ENCODE measurements at regions of chr1 and their contacts with region 1.

Region 1: DNA sequence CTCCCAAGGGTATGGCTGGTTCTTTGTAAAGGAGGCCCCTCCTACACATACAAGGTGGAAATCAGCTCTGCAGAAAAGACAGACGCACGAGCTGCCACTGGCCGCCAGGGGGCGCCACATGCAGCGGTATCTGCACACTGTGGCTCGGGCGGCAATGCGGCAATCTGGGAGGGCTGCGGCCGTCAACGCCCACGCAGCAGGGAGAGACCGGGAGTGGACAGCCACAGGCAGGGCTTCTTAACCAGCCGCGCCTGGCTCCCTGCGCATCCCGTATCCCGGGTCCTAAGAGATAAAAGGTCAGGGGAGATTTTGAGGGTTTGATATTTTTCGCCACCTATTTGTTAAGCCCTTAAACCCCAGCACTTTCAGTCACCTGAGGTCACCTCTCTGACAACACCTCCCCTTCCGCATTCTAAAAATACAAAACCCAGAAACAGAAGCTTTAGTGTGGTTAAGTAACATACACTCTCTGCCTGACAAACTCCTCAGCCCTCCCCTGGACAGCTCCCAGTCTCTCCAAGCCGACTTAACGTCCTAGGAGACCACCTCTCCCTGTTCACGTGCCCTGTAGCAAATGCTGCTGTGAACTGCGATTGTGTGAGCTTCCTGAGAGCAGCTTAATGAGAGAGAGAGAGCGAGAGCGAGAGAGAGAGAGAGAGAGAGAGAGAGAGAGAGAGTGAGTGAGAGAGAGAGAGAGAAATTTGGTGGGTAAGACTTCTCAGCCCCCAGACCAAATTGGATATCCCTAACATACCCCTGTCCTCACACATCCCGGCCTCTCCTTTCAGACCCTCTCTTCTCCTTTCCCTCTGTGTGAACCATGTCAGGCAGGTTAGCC is 13.5 kb upstream of the KCNA2 start:
- DNase-seq: peak; percentile 79 to 96 (median 90)
- ATAC-seq: peak; percentile 84
- H3K4me3 ChIP-seq: peak overlapping the region; percentile 62 to 65
- H3K4me3 Mint-ChIP-seq: peak overlapping the region; percentile 89
- H3K27ac ChIP-seq: peak overlapping the region; percentile 58 to 73
- H3K27ac Mint-ChIP-seq: peak overlapping the region; percentile 89
- H3K4me1 ChIP-seq: peaks cover 28% of the 10 kb centered on the region
- H3K4me1 Mint-ChIP-seq: peaks cover 41% of the 10 kb centered on the region
- H3K27me3 ChIP-seq: peaks cover 0 to 4% of the 10 kb centered on the region in 2 experiments
- H3K27me3 Mint-ChIP-seq: no peaks in the 10 kb centered on the region
- CTCF ChIP-seq: peak; percentile 97

Region 2: GRCh38 chr1:110196917-110197765 is 422.5 kb before region 1 on chr1:
- CTCF ChIA-PET with region 1: no interaction called
- POLR2A ChIA-PET with region 1: no interaction called
- intact Hi-C with region 1: no loop called
- DNase-seq: peak in 8 of 9 experiments; percentile 15 to 71 (median 55)
- ATAC-seq: peak; percentile 99
- H3K4me3 ChIP-seq: no peak overlapping the region
- H3K4me3 Mint-ChIP-seq: no peak overlapping the region
- H3K27ac ChIP-seq: no peak overlapping the region
- H3K27ac Mint-ChIP-seq: no peak overlapping the region
- H3K4me1 ChIP-seq: no peaks in the 10 kb centered on the region
- H3K4me1 Mint-ChIP-seq: no peaks in the 10 kb centered on the region
- H3K27me3 ChIP-seq: no peaks in the 10 kb centered on the region
- H3K27me3 Mint-ChIP-seq: no peaks in the 10 kb centered on the region
- CTCF ChIP-seq: peak; percentile 94

Region 3: DNA sequence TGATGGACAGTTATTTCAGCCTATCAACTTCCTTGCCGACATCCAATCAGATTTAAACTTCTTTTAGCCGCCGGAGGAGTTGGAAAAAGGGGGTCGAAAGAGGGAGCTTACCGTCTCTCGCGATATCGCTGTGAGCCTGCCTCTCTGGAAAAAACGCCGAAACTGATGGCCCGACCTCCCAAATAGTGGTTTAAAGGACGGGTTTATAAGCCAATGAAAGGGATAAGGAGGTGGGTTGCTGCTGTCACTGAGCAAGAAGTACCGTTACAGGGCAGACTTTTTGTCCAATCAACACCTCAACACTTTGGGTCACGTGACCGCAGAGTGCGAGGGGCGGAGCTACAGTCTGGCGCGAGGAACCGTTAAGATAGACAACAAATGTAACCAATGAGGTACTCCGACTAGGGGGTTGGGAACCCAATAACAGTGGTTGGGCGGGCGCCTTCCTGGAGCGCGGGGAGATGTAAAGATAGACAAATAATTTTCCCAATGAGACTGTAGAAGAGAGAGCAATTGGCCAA is 280.7 kb before region 1 on chr1 and contains the start of gene RBM15:
- CTCF ChIA-PET with region 1: no interaction called
- POLR2A ChIA-PET with region 1: no interaction called
- intact Hi-C with region 1: loop called in 1 of 2 experiments (anchors 1 kb)
- DNase-seq: peak; percentile 92 to 100 (median 96)
- ATAC-seq: peak; percentile 74
- H3K4me3 ChIP-seq: peak within 1 kb of the TSS; percentile 91 to 97
- H3K4me3 Mint-ChIP-seq: no peak within 1 kb of the TSS
- H3K27ac ChIP-seq: peak within 1 kb of the TSS; percentile 87 to 98
- H3K27ac Mint-ChIP-seq: no peak within 1 kb of the TSS
- H3K4me1 ChIP-seq: peaks cover 49% of the 10 kb centered on the region
- H3K4me1 Mint-ChIP-seq: peaks cover 56% of the 10 kb centered on the region
- H3K27me3 ChIP-seq: no peaks in the 10 kb centered on the region
- H3K27me3 Mint-ChIP-seq: no peaks in the 10 kb centered on the region
- CTCF ChIP-seq: no peak
- total RNA-seq, gene RBM15: 57.1 to 59.3 TPM

Region 4: GRCh38 chr1:110554871-110555801 is 64.5 kb before region 1 on chr1:
- CTCF ChIA-PET with region 1: interaction called, 34 read pairs
- POLR2A ChIA-PET with region 1: interaction called, 4 read pairs
- intact Hi-C with region 1: loop called (anchors 1 kb)
- DNase-seq: peak; percentile 24 to 75 (median 57)
- ATAC-seq: peak; percentile 97
- H3K4me3 ChIP-seq: peak overlapping the region in 1 of 2 experiments; percentile 23
- H3K4me3 Mint-ChIP-seq: peak overlapping the region; percentile 27
- H3K27ac ChIP-seq: no peak overlapping the region
- H3K27ac Mint-ChIP-seq: no peak overlapping the region
- H3K4me1 ChIP-seq: peaks cover 5% of the 10 kb centered on the region
- H3K4me1 Mint-ChIP-seq: peaks cover 4% of the 10 kb centered on the region
- H3K27me3 ChIP-seq: no peaks in the 10 kb centered on the region
- H3K27me3 Mint-ChIP-seq: peaks cover 44% of the 10 kb centered on the region
- CTCF ChIP-seq: peak; percentile 58

Region 5: DNA sequence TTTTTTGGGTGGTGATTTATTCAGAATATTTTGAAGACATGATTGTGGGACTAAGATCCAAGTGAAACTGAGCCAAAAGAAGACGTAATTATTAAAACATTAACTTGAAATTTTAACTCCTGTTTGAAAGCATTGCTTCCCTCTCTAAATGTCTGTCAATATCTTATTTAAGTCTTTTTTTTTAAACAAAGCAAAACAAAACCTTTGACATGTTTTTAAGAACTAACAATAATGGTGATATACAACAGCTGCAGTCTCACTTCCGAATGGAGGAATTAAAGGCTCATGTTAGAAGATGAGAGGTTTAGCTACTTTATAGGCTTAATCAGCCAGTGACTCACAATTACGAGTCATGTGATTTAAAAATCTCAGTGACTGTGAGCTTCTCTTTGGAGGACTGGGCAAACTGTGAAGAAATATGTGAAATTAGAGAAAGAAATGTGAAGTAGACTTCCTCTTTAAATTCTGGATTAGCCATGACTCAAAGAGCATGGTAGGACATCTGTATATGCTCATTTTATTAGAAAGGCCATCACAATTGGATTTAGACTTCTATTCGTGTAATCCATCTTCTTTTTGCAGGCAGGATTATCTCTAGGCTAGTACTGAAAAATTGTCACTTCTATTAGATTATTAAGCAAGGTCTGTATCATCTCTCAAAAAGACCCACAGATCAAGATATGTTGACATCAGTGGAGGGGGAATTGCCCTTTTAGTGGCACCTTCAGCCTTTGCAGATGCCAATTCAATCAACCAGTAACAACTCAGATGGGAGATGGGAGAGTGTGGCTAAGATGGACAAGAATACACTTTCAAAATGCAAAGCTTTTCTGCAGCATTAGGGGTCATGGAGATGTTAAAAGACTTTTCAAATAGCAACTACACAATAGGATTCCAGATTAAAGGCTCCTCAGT is 26.4 kb after region 1 on chr1:
- CTCF ChIA-PET with region 1: interaction called, 26 read pairs
- POLR2A ChIA-PET with region 1: interaction called, 9 read pairs
- intact Hi-C with region 1: no loop called
- DNase-seq: peak in 2 of 9 experiments; percentile 27 to 53
- ATAC-seq: peak; percentile 28
- H3K4me3 ChIP-seq: no peak overlapping the region
- H3K4me3 Mint-ChIP-seq: no peak overlapping the region
- H3K27ac ChIP-seq: peak overlapping the region in 1 of 2 experiments; percentile 70
- H3K27ac Mint-ChIP-seq: peak overlapping the region; percentile 28
- H3K4me1 ChIP-seq: peaks cover 77% of the 10 kb centered on the region
- H3K4me1 Mint-ChIP-seq: peaks cover 43% of the 10 kb centered on the region
- H3K27me3 ChIP-seq: no peaks in the 10 kb centered on the region
- H3K27me3 Mint-ChIP-seq: no peaks in the 10 kb centered on the region
- CTCF ChIP-seq: no peak

Region 6: DNA sequence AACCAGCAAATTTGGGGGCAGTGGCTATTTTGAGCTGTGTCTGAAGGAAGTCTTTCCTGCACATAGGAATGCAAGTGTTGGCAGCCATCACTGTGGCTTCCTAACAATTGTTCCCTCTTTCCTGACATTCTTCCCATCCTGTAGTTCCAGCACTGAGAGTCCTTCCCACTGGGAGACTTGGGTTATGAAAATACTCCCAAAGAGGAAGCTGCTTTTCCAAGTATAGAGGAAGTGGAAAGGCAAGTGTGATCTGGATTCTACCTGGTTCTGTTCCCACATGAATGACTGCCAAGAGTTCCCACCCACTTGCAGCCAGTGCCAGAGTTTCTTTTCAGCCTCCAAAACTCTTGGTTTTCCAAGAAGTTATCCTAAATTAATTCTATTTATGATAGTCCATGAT is 154.8 kb after region 1 on chr1:
- CTCF ChIA-PET with region 1: interaction called, 108 read pairs
- POLR2A ChIA-PET with region 1: no interaction called
- intact Hi-C with region 1: no loop called
- DNase-seq: no peak
- ATAC-seq: no peak
- H3K4me3 ChIP-seq: no peak overlapping the region
- H3K4me3 Mint-ChIP-seq: no peak overlapping the region
- H3K27ac ChIP-seq: no peak overlapping the region
- H3K27ac Mint-ChIP-seq: no peak overlapping the region
- H3K4me1 ChIP-seq: no peaks in the 10 kb centered on the region
- H3K4me1 Mint-ChIP-seq: no peaks in the 10 kb centered on the region
- H3K27me3 ChIP-seq: peaks cover 0 to 6% of the 10 kb centered on the region in 2 experiments
- H3K27me3 Mint-ChIP-seq: peaks cover 11% of the 10 kb centered on the region
- CTCF ChIP-seq: no peak

Region 7: GRCh38 chr1:110829955-110830553 is 210.4 kb after region 1 on chr1:
- CTCF ChIA-PET with region 1: interaction called, 15 read pairs
- POLR2A ChIA-PET with region 1: no interaction called
- intact Hi-C with region 1: no loop called
- DNase-seq: peak in 6 of 9 experiments; percentile 8 to 73 (median 28)
- ATAC-seq: peak; percentile 97
- H3K4me3 ChIP-seq: no peak overlapping the region
- H3K4me3 Mint-ChIP-seq: no peak overlapping the region
- H3K27ac ChIP-seq: no peak overlapping the region
- H3K27ac Mint-ChIP-seq: no peak overlapping the region
- H3K4me1 ChIP-seq: peaks cover 5% of the 10 kb centered on the region
- H3K4me1 Mint-ChIP-seq: peaks cover 15% of the 10 kb centered on the region
- H3K27me3 ChIP-seq: no peaks in the 10 kb centered on the region
- H3K27me3 Mint-ChIP-seq: no peaks in the 10 kb centered on the region
- CTCF ChIP-seq: peak; percentile 91

Region 8: DNA sequence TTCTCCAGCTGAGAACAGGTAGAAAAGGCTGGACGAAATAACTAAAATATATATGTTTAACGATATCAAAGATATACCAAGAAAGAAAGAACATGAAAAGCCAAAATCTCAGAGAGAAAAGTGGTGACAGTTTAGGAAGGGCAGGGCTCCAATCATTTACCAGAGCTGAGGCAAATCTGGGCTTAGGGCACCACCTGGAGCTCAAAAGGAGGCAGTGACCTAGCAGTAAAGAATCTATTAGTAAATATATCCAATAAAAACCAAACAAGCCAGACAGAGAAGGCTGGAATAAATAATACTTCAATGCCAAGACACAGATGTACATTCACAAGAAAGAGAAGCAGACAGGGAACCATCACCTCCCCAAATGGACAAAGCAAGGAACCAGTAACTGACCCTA is 714.5 kb after region 1 on chr1:
- CTCF ChIA-PET with region 1: no interaction called
- POLR2A ChIA-PET with region 1: no interaction called
- intact Hi-C with region 1: loop called in 1 of 2 experiments (anchors 5 kb)
- DNase-seq: peak; percentile 19 to 82 (median 57)
- ATAC-seq: peak; percentile 87
- H3K4me3 ChIP-seq: no peak overlapping the region
- H3K4me3 Mint-ChIP-seq: no peak overlapping the region
- H3K27ac ChIP-seq: no peak overlapping the region
- H3K27ac Mint-ChIP-seq: no peak overlapping the region
- H3K4me1 ChIP-seq: no peaks in the 10 kb centered on the region
- H3K4me1 Mint-ChIP-seq: peaks cover 6% of the 10 kb centered on the region
- H3K27me3 ChIP-seq: no peaks in the 10 kb centered on the region
- H3K27me3 Mint-ChIP-seq: no peaks in the 10 kb centered on the region
- CTCF ChIP-seq: peak; percentile 73

Measured in CD8-positive, alpha-beta T cell (primary cell).